ENCODE measurements at regions of chr3 and their contacts with region 1.

Region 1: GRCh38 chr3:184727357-184728009 is 15.6 kb upstream of the MAGEF1 start:
- DNase-seq: peak; percentile 62
- H3K4me3 Mint-ChIP-seq: no peak overlapping the region
- H3K27ac Mint-ChIP-seq: no peak overlapping the region
- H3K4me1 Mint-ChIP-seq: no peaks in the 10 kb centered on the region
- H3K27me3 Mint-ChIP-seq: peaks cover 1% of the 10 kb centered on the region

Region 2: DNA sequence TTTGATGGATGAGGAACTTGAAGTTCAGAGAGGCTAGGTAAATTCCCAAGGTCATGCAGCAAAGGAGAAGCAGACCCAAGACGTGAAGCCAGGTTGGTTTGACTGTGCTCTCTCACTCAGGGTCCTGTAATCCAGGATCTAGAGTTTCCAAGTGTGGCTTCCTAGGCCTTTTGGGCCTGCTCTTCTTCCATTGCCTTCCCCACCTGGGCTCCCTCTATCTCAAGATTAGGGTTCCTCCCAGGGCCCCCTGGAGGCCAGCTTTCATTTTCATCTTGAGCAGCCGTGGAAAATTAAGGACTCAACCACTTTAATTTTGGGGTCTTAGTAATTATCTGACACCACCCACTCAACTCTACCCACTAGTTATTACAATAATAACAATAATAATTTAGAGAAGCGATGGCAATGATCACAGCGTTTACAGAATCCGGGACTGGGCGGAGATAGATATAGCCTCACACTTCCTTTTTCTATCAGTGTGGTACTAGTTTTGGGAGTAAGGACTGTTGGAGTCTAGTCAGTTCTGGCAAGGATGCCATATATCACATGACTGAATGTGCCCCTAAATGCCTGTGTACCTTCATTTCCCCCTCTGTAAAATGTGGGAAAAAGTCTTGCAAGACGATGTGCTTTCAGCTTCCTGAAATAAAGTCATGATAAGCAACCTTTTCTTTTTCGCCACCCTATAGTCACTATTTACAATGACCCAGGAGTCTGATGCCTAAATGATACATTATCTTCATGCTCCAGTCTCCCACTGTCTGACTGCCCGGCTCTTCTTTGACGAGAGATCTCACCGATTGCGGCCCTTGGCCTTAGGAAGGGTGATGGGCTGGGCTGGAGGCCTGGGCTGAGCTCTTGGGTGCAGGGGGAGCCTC is 14.6 kb after region 1 on chr3:
- CTCF ChIA-PET with region 1: interaction called, 16 read pairs
- POLR2A ChIA-PET with region 1: no interaction called
- intact Hi-C with region 1: no loop called
- DNase-seq: no peak
- H3K4me3 Mint-ChIP-seq: no peak overlapping the region
- H3K27ac Mint-ChIP-seq: no peak overlapping the region
- H3K4me1 Mint-ChIP-seq: peaks cover 4% of the 10 kb centered on the region
- H3K27me3 Mint-ChIP-seq: peaks cover 2% of the 10 kb centered on the region

Region 3: GRCh38 chr3:184757022-184757651 is 29.7 kb after region 1 on chr3:
- CTCF ChIA-PET with region 1: no interaction called
- POLR2A ChIA-PET with region 1: no interaction called
- intact Hi-C with region 1: no loop called
- DNase-seq: no peak
- H3K4me3 Mint-ChIP-seq: no peak overlapping the region
- H3K27ac Mint-ChIP-seq: no peak overlapping the region
- H3K4me1 Mint-ChIP-seq: no peaks in the 10 kb centered on the region
- H3K27me3 Mint-ChIP-seq: no peaks in the 10 kb centered on the region

Region 4: DNA sequence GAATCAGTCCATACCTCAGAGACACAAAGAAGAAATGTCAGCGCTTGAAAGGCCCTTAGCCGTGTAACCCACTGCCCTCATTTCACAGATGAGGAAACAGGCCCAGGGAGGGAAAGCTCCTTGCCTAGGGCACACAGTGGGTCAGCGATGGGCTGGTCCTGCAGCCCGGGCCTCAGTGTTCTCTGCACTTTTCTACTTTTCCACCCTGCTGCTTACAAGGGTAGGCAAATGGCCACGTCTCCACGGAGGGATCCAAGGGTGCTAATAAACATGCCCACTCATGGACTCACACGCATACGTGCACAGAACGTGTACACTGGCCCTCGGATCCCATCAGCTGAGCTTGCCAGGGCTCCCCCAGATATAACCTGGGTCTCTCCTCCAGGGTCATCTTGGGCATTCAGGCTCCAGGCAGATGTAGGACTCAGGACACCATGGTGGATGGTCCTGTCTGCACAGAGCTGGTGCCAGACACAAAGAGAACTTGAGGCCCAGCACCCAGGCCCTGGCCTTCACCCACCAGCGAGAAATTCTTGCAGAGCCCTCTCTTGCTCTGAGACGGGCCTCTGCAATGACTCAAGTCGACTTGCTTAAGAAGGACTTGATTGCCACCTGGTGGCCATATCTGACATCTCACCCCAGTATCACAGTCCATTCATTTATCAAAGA is 50.0 kb after region 1 on chr3:
- CTCF ChIA-PET with region 1: interaction called, 13 read pairs
- POLR2A ChIA-PET with region 1: no interaction called
- intact Hi-C with region 1: loop called (anchors 5 kb)
- DNase-seq: peak; percentile 88
- H3K4me3 Mint-ChIP-seq: no peak overlapping the region
- H3K27ac Mint-ChIP-seq: no peak overlapping the region
- H3K4me1 Mint-ChIP-seq: no peaks in the 10 kb centered on the region
- H3K27me3 Mint-ChIP-seq: peaks cover 8% of the 10 kb centered on the region

Measured in activated CD4-positive, alpha-beta memory T cell treated with anti-CD3 and anti-CD28 coated beads for 36 hours (primary cell).